Activated CD4-positive, alpha-beta memory T cell treated with anti-CD3 and anti-CD28 coated beads for 36 hours (primary cell): ENCODE measurements at regions of chr1 and their contacts with region 1.

Region 1: GRCh38 chr1:39653546-39654031 is 14.1 kb upstream of the HEYL start:
- DNase-seq: peak; percentile 88
- H3K4me3 Mint-ChIP-seq: no peak overlapping the region
- H3K27ac Mint-ChIP-seq: no peak overlapping the region
- H3K4me1 Mint-ChIP-seq: peaks cover 16% of the 10 kb centered on the region
- H3K27me3 Mint-ChIP-seq: peaks cover 12% of the 10 kb centered on the region

Region 2: DNA sequence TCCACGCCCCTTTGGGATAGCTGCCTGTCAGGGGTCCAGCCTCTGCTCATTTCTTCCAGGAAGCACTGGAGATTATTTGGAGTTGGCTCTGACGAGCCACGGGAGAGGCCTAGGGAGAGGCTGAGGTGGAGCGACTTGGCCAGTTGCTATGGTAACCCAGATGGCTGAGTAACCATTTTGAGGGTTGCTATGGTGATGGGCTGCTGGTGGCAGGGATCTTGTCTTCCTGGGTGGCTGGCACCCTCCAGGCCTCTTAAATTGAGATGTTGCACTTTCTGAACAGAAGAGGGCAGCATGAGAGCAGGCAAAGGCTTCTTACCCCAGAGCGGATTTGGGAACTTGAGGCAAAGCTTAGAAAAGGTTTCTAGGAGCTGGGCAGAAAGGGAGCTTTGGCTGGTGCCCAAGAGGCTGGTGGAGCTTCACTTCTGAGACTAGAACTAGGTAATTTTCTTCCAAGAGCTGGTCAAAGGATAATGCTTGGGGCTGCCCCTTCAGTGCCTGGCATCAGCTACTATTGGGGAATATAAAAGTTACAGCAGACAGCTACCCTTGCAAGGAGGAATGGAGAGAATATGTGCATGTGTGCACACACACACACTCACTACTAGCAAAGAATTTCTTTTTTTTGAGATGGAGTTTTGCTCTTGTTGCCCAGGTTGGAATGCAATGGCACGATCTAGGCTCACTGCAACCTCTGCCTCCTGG is 554.9 kb before region 1 on chr1:
- CTCF ChIA-PET with region 1: interaction called, 16 read pairs
- POLR2A ChIA-PET with region 1: no interaction called
- intact Hi-C with region 1: no loop called
- DNase-seq: peak; percentile 76
- H3K4me3 Mint-ChIP-seq: no peak overlapping the region
- H3K27ac Mint-ChIP-seq: peak overlapping the region; percentile 46
- H3K4me1 Mint-ChIP-seq: peaks cover 22% of the 10 kb centered on the region
- H3K27me3 Mint-ChIP-seq: no peaks in the 10 kb centered on the region

Region 3: GRCh38 chr1:39609618-39610331 is 43.8 kb before region 1 on chr1:
- CTCF ChIA-PET with region 1: interaction called, 383 read pairs
- POLR2A ChIA-PET with region 1: no interaction called
- intact Hi-C with region 1: loop called (anchors 1 kb)
- DNase-seq: peak; percentile 80
- H3K4me3 Mint-ChIP-seq: no peak overlapping the region
- H3K27ac Mint-ChIP-seq: no peak overlapping the region
- H3K4me1 Mint-ChIP-seq: peaks cover 3% of the 10 kb centered on the region
- H3K27me3 Mint-ChIP-seq: peaks cover 1% of the 10 kb centered on the region

Region 4: DNA sequence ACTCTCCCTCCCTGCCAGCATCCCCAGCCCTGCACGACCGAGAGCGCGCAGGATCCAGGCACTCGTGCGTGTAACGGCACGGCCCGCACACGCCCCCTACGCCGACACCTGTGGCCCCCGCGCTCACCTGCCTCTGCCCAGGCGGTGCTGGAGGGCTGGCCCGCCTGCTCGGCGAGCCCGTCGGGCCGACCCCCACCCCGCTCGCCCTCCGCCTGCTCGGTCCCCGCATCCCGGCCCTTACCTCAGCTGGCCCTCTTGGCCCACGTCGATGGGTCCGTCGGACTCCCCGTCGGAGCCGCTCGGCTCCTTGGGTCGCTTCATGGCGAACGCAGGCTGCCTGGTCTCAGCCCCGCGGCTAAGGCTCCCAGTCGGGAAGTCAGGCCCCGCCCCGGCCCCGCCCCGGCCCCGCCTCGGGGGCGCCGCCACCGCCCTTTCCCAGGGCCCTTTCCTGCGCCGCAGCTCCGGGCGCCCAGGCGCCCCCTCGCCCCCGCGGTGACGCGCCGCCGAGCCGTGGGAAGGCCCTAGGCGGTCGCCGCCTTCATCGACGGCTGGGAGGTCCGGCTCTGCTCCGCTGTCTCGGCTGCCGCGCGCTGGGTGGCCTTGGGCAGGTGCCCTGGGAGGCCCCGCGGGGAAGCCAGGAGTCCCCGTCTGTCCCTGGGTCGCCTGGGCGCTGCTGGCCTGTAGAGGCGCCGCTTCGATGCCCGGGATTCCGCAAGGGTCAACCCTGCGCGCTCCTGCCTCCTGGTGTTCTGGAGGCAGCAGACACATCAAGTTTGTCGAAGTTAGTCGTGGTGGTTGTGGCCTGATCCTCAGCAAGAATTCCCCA is 14.1 kb before region 1 on chr1 and contains the start of gene HEYL:
- CTCF ChIA-PET with region 1: interaction called, 14 read pairs
- POLR2A ChIA-PET with region 1: no interaction called
- intact Hi-C with region 1: no loop called
- DNase-seq: peak; percentile 81
- H3K4me3 Mint-ChIP-seq: peak within 1 kb of the TSS; percentile 57
- H3K27ac Mint-ChIP-seq: no peak within 1 kb of the TSS
- H3K4me1 Mint-ChIP-seq: peaks cover 3% of the 10 kb centered on the region
- H3K27me3 Mint-ChIP-seq: peaks cover 29% of the 10 kb centered on the region
- total RNA-seq, gene HEYL: 0.19 TPM

Region 5: GRCh38 chr1:39680751-39681150 is 27.2 kb after region 1 on chr1:
- CTCF ChIA-PET with region 1: interaction called, 158 read pairs
- POLR2A ChIA-PET with region 1: no interaction called
- intact Hi-C with region 1: no loop called
- DNase-seq: no peak
- H3K4me3 Mint-ChIP-seq: no peak overlapping the region
- H3K27ac Mint-ChIP-seq: no peak overlapping the region
- H3K4me1 Mint-ChIP-seq: peaks cover 18% of the 10 kb centered on the region
- H3K27me3 Mint-ChIP-seq: peaks cover 4% of the 10 kb centered on the region

Region 6: GRCh38 chr1:39720094-39720999 is 66.8 kb after region 1 on chr1:
- CTCF ChIA-PET with region 1: interaction called, 45 read pairs
- POLR2A ChIA-PET with region 1: no interaction called
- intact Hi-C with region 1: loop called (anchors 5 kb)
- DNase-seq: no peak
- H3K4me3 Mint-ChIP-seq: no peak overlapping the region
- H3K27ac Mint-ChIP-seq: peak overlapping the region; percentile 0
- H3K4me1 Mint-ChIP-seq: no peaks in the 10 kb centered on the region
- H3K27me3 Mint-ChIP-seq: peaks cover 41% of the 10 kb centered on the region